B cell (primary cell): ENCODE measurements at regions of chr5 and their contacts with region 1.

Region 1: GRCh38 chr5:58886315-58887207 is 303.7 kb downstream of the RAB3C start:
- DNase-seq: peak; percentile 70
- ATAC-seq: peak; percentile 89
- H3K4me3 ChIP-seq: no peak overlapping the region
- H3K4me3 Mint-ChIP-seq: no peak overlapping the region
- H3K27ac ChIP-seq: no peak overlapping the region
- H3K27ac Mint-ChIP-seq: no peak overlapping the region
- H3K4me1 ChIP-seq: peaks cover 0 to 3% of the 10 kb centered on the region in 2 donors
- H3K4me1 Mint-ChIP-seq: peaks cover 5% of the 10 kb centered on the region
- H3K27me3 ChIP-seq: peaks cover 0 to 7% (median 5%) of the 10 kb centered on the region in 4 experiments
- H3K27me3 Mint-ChIP-seq: peaks cover 14% of the 10 kb centered on the region
- CTCF ChIP-seq: peak; percentile 89

Region 2: DNA sequence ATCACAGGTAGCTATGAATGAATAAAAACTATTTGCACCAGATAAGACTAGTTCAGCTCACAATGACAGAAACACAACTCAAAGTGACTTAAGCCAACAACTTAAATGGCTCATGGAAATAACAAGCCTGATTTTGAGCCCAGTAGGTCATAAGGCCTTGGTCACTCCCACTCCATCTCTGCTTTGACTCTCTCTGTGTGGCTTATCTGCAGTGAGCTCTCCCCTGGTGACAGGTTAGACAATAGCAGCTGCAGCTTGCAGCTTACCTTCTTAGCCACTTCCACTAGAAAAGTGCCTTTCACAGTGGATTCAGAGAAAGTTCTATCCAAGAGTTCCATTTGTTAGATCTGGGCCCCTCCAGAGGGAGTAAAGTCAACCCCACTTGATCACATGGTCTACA is 12.0 kb after region 1 on chr5:
- CTCF ChIA-PET with region 1: interaction called, 32 read pairs
- POLR2A ChIA-PET with region 1: no interaction called
- intact Hi-C with region 1: no loop called
- DNase-seq: no peak
- ATAC-seq: no peak
- H3K4me3 ChIP-seq: no peak overlapping the region
- H3K4me3 Mint-ChIP-seq: no peak overlapping the region
- H3K27ac ChIP-seq: no peak overlapping the region
- H3K27ac Mint-ChIP-seq: no peak overlapping the region
- H3K4me1 ChIP-seq: no peaks in the 10 kb centered on the region
- H3K4me1 Mint-ChIP-seq: no peaks in the 10 kb centered on the region
- H3K27me3 ChIP-seq: peaks cover 0 to 2% (median under 1%) of the 10 kb centered on the region in 4 experiments
- H3K27me3 Mint-ChIP-seq: peaks cover 8% of the 10 kb centered on the region
- CTCF ChIP-seq: no peak

Region 3: GRCh38 chr5:59174248-59174844 is 287.8 kb after region 1 on chr5:
- CTCF ChIA-PET with region 1: interaction called, 116 read pairs
- POLR2A ChIA-PET with region 1: no interaction called
- intact Hi-C with region 1: loop called (anchors 1 kb)
- DNase-seq: peak; percentile 33
- ATAC-seq: peak; percentile 56
- H3K4me3 ChIP-seq: no peak overlapping the region
- H3K4me3 Mint-ChIP-seq: no peak overlapping the region
- H3K27ac ChIP-seq: no peak overlapping the region
- H3K27ac Mint-ChIP-seq: no peak overlapping the region
- H3K4me1 ChIP-seq: peaks cover 0 to 5% of the 10 kb centered on the region in 2 donors
- H3K4me1 Mint-ChIP-seq: peaks cover 3% of the 10 kb centered on the region
- H3K27me3 ChIP-seq: no peaks in the 10 kb centered on the region
- H3K27me3 Mint-ChIP-seq: no peaks in the 10 kb centered on the region
- CTCF ChIP-seq: peak; percentile 62

Region 4: GRCh38 chr5:59367791-59368394 is 481.3 kb after region 1 on chr5:
- CTCF ChIA-PET with region 1: interaction called, 5 read pairs
- POLR2A ChIA-PET with region 1: no interaction called
- intact Hi-C with region 1: loop called (anchors 5 kb)
- DNase-seq: peak; percentile 34
- ATAC-seq: peak; percentile 36
- H3K4me3 ChIP-seq: no peak overlapping the region
- H3K4me3 Mint-ChIP-seq: no peak overlapping the region
- H3K27ac ChIP-seq: no peak overlapping the region
- H3K27ac Mint-ChIP-seq: no peak overlapping the region
- H3K4me1 ChIP-seq: no peaks in the 10 kb centered on the region
- H3K4me1 Mint-ChIP-seq: no peaks in the 10 kb centered on the region
- H3K27me3 ChIP-seq: no peaks in the 10 kb centered on the region
- H3K27me3 Mint-ChIP-seq: peaks cover 3% of the 10 kb centered on the region
- CTCF ChIP-seq: peak; percentile 59